ENCODE measurements at regions of chr13 and their contacts with region 1.

Region 1: DNA sequence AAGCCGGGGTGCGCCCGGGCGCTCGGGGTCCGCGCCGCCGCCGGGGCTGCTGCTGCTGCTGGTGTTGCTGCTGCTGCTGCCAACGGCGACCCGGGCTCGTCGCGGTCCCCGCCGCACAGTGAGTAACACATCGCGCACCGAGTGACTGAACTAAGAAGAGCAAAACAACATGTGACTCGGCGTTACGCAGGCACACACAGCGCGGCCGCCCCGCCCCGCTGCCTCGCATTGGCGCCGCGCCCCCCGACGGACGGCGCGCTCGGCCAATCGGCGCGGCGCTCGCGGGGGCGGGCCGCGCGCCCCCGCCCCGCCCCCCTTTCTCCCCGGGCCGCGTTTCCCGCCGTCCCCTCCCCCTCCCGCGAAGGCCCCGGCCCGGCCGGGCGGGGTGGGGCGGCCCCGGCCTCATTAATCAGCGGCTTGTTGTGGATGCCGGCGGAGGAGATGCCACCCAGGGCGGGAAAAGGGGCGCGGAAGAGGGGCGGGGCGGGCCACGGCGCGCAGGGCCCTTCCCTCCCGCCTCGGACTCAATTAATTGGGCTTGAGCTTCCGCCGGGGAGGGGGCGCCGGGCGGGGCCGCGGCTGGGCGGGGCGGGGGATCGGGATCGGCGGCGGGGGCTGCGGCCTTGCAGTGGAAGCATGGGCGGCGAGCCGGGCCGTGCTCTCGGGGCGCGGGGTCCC is at the start of gene IRS2:
- DNase-seq: peak; percentile 85
- H3K4me3 ChIP-seq: peak within 1 kb of the TSS; percentile 51 to 78 (median 58)
- H3K27ac ChIP-seq: no peak within 1 kb of the TSS
- H3K4me1 ChIP-seq: peaks cover 3% of the 10 kb centered on the region
- H3K27me3 ChIP-seq: peaks cover 27 to 46% of the 10 kb centered on the region in 2 experiments
- CTCF ChIP-seq: no peak
- POLR2A ChIP-seq: peak; percentile 82
- total RNA-seq, gene IRS2: 4.4 and 5.9 TPM in 2 replicates

Region 2: GRCh38 chr13:108218044-108218974 is 1568.3 kb before region 1 on chr13 and contains the start of gene ABHD13:
- CTCF ChIA-PET with region 1: no interaction called
- POLR2A ChIA-PET with region 1: no interaction called
- dilution Hi-C with region 1: no loop called
- intact Hi-C with region 1: loop called (anchors 5 kb)
- DNase-seq: peak; percentile 90
- H3K4me3 ChIP-seq: peak within 1 kb of the TSS; percentile 74 to 81 (median 74)
- H3K27ac ChIP-seq: peak within 1 kb of the TSS; percentile 85
- H3K4me1 ChIP-seq: peaks cover 18% of the 10 kb centered on the region
- H3K27me3 ChIP-seq: no peaks in the 10 kb centered on the region
- CTCF ChIP-seq: no peak
- POLR2A ChIP-seq: peak; percentile 73
- total RNA-seq, gene ABHD13: 6.2 and 7.2 TPM in 2 replicates

Region 3: GRCh38 chr13:109145631-109146030 is 641.0 kb before region 1 on chr13:
- CTCF ChIA-PET with region 1: interaction called, 16 read pairs
- POLR2A ChIA-PET with region 1: no interaction called
- dilution Hi-C with region 1: no loop called
- intact Hi-C with region 1: loop called (anchors 1 kb)
- DNase-seq: peak; percentile 71
- H3K4me3 ChIP-seq: no peak overlapping the region
- H3K27ac ChIP-seq: peak overlapping the region; percentile 57
- H3K4me1 ChIP-seq: peaks cover 13% of the 10 kb centered on the region
- H3K27me3 ChIP-seq: peaks cover 10 to 19% of the 10 kb centered on the region in 2 experiments
- CTCF ChIP-seq: peak; percentile 73 to 79
- POLR2A ChIP-seq: no peak

Region 4: GRCh38 chr13:109275852-109276251 is 510.7 kb before region 1 on chr13:
- CTCF ChIA-PET with region 1: no interaction called
- POLR2A ChIA-PET with region 1: no interaction called
- dilution Hi-C with region 1: no loop called
- intact Hi-C with region 1: loop called (anchors 10 kb)
- DNase-seq: no peak
- H3K4me3 ChIP-seq: no peak overlapping the region
- H3K27ac ChIP-seq: no peak overlapping the region
- H3K4me1 ChIP-seq: peaks cover 27% of the 10 kb centered on the region
- H3K27me3 ChIP-seq: no peaks in the 10 kb centered on the region
- CTCF ChIP-seq: no peak
- POLR2A ChIP-seq: no peak

Region 5: GRCh38 chr13:109652531-109652930 is 134.1 kb before region 1 on chr13:
- CTCF ChIA-PET with region 1: no interaction called
- POLR2A ChIA-PET with region 1: no interaction called
- dilution Hi-C with region 1: no loop called
- intact Hi-C with region 1: loop called (anchors 2 kb)
- DNase-seq: peak; percentile 12
- H3K4me3 ChIP-seq: no peak overlapping the region
- H3K27ac ChIP-seq: no peak overlapping the region
- H3K4me1 ChIP-seq: peaks cover 5% of the 10 kb centered on the region
- H3K27me3 ChIP-seq: peaks cover 2 to 51% of the 10 kb centered on the region in 2 experiments
- CTCF ChIP-seq: no peak
- POLR2A ChIP-seq: no peak

Region 6: GRCh38 chr13:109743706-109744453 is 42.7 kb before region 1 on chr13:
- CTCF ChIA-PET with region 1: interaction called, 10 read pairs
- POLR2A ChIA-PET with region 1: no interaction called
- dilution Hi-C with region 1: no loop called
- intact Hi-C with region 1: loop called (anchors 2 kb)
- DNase-seq: peak; percentile 69
- H3K4me3 ChIP-seq: no peak overlapping the region
- H3K27ac ChIP-seq: no peak overlapping the region
- H3K4me1 ChIP-seq: no peaks in the 10 kb centered on the region
- H3K27me3 ChIP-seq: no peaks in the 10 kb centered on the region
- CTCF ChIP-seq: no peak
- POLR2A ChIP-seq: no peak